ENCODE measurements at regions of chr16 and their contacts with region 1.

Region 1: DNA sequence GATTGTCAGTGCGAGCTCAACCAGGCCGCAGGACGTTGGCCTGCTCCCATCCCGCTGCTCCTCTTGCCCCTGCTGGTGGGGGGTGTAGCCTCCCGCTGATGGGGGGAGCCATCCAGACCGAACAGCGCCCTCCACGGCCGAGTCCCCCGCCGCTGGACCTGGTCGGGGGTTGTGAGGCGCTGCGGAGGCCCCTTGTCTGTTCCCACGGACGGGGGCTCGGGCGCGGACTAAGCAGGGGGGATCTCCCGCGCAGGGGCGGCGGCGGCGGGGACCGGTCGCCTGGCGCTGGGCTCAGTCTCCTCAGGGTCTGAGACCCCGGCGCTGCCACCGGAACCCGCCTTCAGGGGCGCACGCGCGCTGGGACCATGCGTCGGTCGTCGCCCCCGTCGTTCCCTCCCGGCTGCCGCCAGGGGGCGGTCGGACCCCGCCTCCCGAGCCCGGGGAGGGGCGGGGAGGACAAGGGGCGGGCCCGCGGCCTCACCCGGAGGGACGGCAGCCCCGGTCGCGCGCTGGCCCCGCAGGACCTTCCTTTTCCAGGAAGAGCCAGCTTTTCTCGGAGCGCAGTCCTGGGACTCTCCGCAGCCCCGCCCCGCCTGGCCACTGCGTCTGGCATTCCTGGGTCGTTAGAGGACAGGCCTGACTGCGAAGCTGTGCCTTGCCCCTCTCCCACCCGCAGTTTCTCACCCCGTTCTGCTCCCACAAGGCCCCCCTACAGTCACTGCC is 6.3 kb upstream of the IL32 start:
- DNase-seq: peak; percentile 81
- ATAC-seq: peak; percentile 99
- H3K4me3 ChIP-seq: peak overlapping the region; percentile 75
- H3K27ac ChIP-seq: peak overlapping the region; percentile 89
- H3K4me1 ChIP-seq: peaks cover 5% of the 10 kb centered on the region
- H3K27me3 ChIP-seq: no peaks in the 10 kb centered on the region; the same call in 1 of the 2 replicates
- CTCF ChIP-seq: peak; percentile 94
- POLR2A ChIP-seq: peak; percentile 39; the same call in 1 of the 2 replicates
- RAD21 ChIP-seq: peak; percentile 86

Region 2: DNA sequence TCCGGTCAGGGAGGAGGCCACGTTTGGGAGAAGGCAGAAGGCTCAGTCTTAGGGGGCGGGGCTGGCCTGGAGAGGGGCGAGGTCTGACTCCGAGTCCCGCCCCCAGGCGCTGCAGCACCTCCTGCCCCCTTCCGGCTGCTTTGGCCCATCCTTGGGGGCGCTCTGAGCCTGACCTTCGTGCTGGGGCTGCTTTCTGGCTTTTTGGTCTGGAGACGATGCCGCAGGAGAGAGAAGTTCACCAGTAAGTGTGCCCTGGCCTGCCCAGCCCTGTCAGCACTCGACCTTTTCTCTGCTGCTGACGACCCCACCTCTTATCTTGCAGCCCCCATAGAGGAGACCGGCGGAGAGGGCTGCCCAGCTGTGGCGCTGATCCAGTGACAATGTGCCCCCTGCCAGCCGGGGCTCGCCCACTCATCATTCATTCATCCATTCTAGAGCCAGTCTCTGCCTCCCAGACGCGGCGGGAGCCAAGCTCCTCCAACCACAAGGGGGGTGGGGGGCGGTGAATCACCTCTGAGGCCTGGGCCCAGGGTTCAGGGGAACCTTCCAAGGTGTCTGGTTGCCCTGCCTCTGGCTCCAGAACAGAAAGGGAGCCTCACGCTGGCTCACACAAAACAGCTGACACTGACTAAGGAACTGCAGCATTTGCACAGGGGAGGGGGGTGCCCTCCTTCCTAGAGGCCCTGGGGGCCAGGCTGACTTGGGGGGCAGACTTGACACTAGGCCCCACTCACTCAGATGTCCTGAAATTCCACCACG is 37.5 kb before region 1 on chr16:
- CTCF ChIA-PET with region 1: no interaction called
- POLR2A ChIA-PET with region 1: interaction called, 12 read pairs
- dilution Hi-C with region 1: no loop called
- in situ Hi-C with region 1: no loop called
- intact Hi-C with region 1: no loop called
- DNase-seq: peak; percentile 94
- ATAC-seq: peak; percentile 46
- H3K4me3 ChIP-seq: peak overlapping the region; percentile 77
- H3K27ac ChIP-seq: peak overlapping the region; percentile 97
- H3K4me1 ChIP-seq: peaks cover 11% of the 10 kb centered on the region
- H3K27me3 ChIP-seq: no peaks in the 10 kb centered on the region; the same call in 1 of the 2 replicates
- CTCF ChIP-seq: peak; percentile 38
- POLR2A ChIP-seq: peak; percentile 34; the same call in 1 of the 2 replicates
- RAD21 ChIP-seq: no peak

Region 3: GRCh38 chr16:3099732-3100499 is 40.8 kb after region 1 on chr16:
- CTCF ChIA-PET with region 1: interaction called, 3 read pairs
- POLR2A ChIA-PET with region 1: no interaction called
- dilution Hi-C with region 1: no loop called
- in situ Hi-C with region 1: loop called (anchors 5 kb)
- intact Hi-C with region 1: no loop called
- DNase-seq: peak; percentile 78
- ATAC-seq: peak; percentile 99
- H3K4me3 ChIP-seq: peak overlapping the region; percentile 31; the same call in 1 of the 2 replicates
- H3K27ac ChIP-seq: no peak overlapping the region
- H3K4me1 ChIP-seq: peaks cover 3% of the 10 kb centered on the region
- H3K27me3 ChIP-seq: peaks cover 27% of the 10 kb centered on the region
- CTCF ChIP-seq: no peak
- POLR2A ChIP-seq: no peak
- RAD21 ChIP-seq: no peak

Region 4: DNA sequence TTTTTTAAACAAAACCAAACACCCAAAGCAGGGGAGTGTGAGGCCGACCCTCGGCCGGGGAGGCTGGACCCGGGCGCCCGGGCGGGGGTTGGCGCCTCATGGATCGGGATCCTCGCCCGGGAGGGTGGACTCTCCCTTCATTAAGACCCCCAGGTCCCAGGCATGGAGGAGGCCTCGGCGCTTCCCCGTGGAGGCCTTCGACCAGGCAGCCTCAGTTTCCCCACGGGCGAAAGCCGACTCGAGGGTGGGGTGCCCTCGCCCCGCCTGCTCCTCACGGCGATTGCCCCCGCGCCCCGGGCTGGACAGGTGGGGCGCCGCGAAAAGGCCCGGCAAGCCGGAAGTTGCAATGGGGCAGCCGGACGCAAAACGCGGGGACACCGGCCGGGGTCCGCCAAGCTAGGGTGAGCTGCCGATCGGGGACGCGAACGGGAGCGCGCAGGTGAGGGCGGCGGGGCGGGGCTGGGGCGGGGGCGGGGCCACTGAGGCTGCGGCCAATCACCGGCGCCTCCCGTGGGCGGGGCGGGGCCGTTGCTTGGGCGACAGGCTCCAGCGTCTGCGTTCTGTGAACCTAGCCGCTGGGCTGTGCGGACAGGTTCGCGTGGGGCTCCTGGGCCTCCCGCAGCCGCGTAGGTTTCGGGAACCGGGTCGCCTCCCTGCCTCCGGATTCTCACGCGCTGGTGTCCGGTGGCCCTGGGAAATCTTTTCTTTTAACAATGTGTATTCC is 47.2 kb after region 1 on chr16:
- CTCF ChIA-PET with region 1: interaction called, 3 read pairs
- POLR2A ChIA-PET with region 1: no interaction called
- dilution Hi-C with region 1: no loop called
- in situ Hi-C with region 1: loop called (anchors 5 kb)
- intact Hi-C with region 1: loop called (anchors 2 kb)
- DNase-seq: peak; percentile 89
- ATAC-seq: peak; percentile 99
- H3K4me3 ChIP-seq: peak overlapping the region; percentile 87
- H3K27ac ChIP-seq: peak overlapping the region; percentile 78
- H3K4me1 ChIP-seq: no peaks in the 10 kb centered on the region
- H3K27me3 ChIP-seq: no peaks in the 10 kb centered on the region
- CTCF ChIP-seq: no peak
- POLR2A ChIP-seq: 0 out of 2 replicates have a peak, but pooled peaks have one; percentile 12
- RAD21 ChIP-seq: no peak

Region 5: DNA sequence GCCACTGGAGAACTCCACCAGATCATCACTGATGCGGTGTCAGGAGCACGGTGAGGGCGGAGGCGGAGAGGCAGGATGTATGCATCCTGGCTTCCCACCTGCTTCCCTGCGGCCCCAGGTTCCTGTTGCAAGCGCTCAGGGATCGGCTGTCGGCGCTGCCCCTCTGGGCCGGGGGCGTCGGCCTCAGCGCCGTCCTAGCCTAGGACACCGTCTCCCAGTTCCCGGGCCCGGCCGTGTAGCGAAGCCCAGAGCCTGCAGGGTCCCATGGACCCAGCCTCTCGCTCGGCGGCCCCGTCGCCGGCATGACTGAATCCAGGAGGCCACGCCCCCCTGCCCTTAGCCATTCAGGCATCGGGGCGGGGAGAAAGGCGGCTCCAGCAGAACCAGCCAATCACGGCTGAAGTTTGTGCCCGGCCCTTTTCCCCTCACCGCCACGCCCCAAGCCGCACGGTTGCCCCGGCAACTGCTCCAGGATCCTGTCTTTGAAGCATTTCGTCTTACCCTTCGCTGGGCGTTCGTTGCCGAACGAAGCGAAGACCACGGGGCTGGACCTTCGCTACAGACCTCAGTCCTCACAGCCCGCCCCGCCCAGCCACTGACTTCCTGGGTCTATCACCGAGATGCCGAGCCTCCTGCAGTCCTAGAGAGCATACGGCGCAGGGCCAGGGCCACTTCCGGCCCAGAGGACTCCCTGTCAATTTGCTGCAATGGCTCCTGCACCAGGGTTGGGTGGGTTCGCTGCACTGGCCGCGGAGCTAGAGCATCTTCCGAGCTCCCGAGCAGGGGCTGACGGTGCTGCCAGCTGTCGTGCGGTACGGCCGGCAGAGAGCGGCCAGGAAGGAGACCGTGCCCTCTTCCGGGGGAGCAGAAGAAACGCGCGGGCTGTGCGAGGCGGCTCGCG is 65.1 kb after region 1 on chr16:
- CTCF ChIA-PET with region 1: interaction called, 9 read pairs
- POLR2A ChIA-PET with region 1: no interaction called
- dilution Hi-C with region 1: no loop called
- in situ Hi-C with region 1: no loop called
- intact Hi-C with region 1: loop called (anchors 1 kb)
- DNase-seq: peak; percentile 87
- ATAC-seq: peak; percentile 97
- H3K4me3 ChIP-seq: peak overlapping the region; percentile 48
- H3K27ac ChIP-seq: peak overlapping the region; percentile 53
- H3K4me1 ChIP-seq: peaks cover 5% of the 10 kb centered on the region
- H3K27me3 ChIP-seq: no peaks in the 10 kb centered on the region
- CTCF ChIP-seq: peak; percentile 37
- POLR2A ChIP-seq: no peak
- RAD21 ChIP-seq: peak; percentile 38; the same call in 1 of the 2 replicates

Region 6: DNA sequence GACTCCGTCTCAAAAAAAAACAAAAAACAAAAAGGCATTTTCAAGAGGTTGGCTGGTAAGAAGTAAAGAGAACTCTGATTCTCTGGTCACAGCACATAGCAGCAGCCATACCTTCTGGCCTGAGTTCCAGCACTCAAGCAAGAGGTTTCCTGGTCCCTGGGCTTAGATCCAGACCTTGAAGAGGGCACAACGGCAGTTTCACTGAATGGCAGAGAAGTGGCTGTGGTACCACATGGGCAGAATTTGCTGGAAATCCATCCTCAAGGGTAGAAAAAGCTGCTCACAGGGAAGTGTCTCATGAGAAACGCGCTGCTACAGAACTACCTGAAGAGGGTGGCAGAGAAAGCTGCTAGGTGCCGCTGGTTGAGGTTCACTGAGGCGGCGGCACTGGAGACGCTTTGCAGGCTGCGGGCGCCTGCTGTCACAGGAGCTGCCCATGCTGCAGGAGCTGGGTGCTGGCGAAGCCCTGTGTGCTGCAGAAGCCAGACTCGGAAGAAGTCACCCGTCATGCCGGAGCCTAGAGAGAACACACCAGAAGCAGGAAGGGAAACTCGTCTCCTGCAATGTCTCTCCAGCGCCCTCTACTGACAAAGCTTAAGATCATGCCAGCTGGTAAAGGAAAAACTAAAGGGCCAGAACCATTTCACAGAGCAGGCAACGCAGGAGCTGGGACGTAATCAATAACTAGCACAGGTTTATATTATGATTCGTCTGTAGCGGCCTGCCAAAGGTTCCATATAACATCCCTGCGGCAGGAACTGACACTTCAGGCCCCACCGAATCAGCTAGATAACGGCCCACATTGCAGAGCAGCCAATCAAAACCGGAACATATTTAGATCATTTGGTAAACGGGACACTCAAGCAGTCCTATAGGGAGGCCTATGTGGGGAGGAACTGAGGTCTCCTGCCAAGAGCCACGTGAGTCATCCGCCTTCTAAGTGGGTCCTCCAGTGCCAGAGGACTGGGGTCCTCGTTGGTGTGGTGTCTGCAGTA is 70.3 kb after region 1 on chr16:
- CTCF ChIA-PET with region 1: interaction called, 9 read pairs
- POLR2A ChIA-PET with region 1: no interaction called
- dilution Hi-C with region 1: no loop called
- in situ Hi-C with region 1: no loop called
- intact Hi-C with region 1: loop called (anchors 1 kb)
- DNase-seq: peak; percentile 86
- ATAC-seq: peak; percentile 68
- H3K4me3 ChIP-seq: peak overlapping the region; percentile 2; the same call in 1 of the 2 replicates
- H3K27ac ChIP-seq: no peak overlapping the region
- H3K4me1 ChIP-seq: peaks cover 4% of the 10 kb centered on the region
- H3K27me3 ChIP-seq: no peaks in the 10 kb centered on the region
- CTCF ChIP-seq: peak; percentile 89
- POLR2A ChIP-seq: no peak
- RAD21 ChIP-seq: peak; percentile 78

Region 7: GRCh38 chr16:3166510-3166895 is 107.3 kb after region 1 on chr16:
- CTCF ChIA-PET with region 1: interaction called, 4 read pairs
- POLR2A ChIA-PET with region 1: no interaction called
- dilution Hi-C with region 1: no loop called
- in situ Hi-C with region 1: no loop called
- intact Hi-C with region 1: loop called (anchors 1 kb)
- DNase-seq: no peak
- ATAC-seq: no peak
- H3K4me3 ChIP-seq: no peak overlapping the region
- H3K27ac ChIP-seq: no peak overlapping the region
- H3K4me1 ChIP-seq: no peaks in the 10 kb centered on the region
- H3K27me3 ChIP-seq: peaks cover 26% of the 10 kb centered on the region
- CTCF ChIP-seq: no peak
- POLR2A ChIP-seq: no peak
- RAD21 ChIP-seq: no peak

Region 8: GRCh38 chr16:3346041-3346440 is 286.9 kb after region 1 on chr16:
- CTCF ChIA-PET with region 1: no interaction called
- POLR2A ChIA-PET with region 1: no interaction called
- dilution Hi-C with region 1: no loop called
- in situ Hi-C with region 1: no loop called
- intact Hi-C with region 1: no loop called
- DNase-seq: no peak
- ATAC-seq: no peak
- H3K4me3 ChIP-seq: no peak overlapping the region
- H3K27ac ChIP-seq: no peak overlapping the region
- H3K4me1 ChIP-seq: no peaks in the 10 kb centered on the region
- H3K27me3 ChIP-seq: no peaks in the 10 kb centered on the region; the same call in 1 of the 2 replicates
- CTCF ChIP-seq: no peak
- POLR2A ChIP-seq: no peak
- RAD21 ChIP-seq: no peak

Region 9: DNA sequence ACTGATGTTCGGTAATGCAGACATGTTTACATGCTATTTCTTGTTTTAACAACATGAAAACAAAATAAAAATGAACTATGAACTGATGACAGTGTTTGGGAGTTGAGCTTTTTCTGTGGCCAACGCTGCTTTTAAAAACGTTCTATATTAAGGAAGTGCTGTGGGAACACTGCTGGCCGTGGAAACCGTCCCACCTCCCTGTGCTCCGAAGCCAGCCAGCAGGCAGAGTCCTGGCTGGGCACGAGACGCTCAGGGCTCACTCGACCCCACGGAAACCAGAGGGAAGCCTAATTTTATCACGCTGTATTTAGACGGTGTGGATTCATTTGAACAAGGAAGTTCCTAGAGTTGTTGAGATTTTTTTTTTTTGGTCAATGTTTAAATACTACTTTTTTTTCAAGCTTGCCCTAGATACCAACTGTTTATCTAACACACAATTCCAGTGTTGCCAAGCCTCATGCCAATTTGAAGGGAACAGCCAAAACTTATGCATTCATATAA is 1031.2 kb after region 1 on chr16:
- CTCF ChIA-PET with region 1: no interaction called
- POLR2A ChIA-PET with region 1: no interaction called
- dilution Hi-C with region 1: no loop called
- in situ Hi-C with region 1: no loop called
- intact Hi-C with region 1: no loop called
- DNase-seq: no peak
- ATAC-seq: no peak
- H3K4me3 ChIP-seq: no peak overlapping the region
- H3K27ac ChIP-seq: no peak overlapping the region
- H3K4me1 ChIP-seq: peaks cover 19% of the 10 kb centered on the region
- H3K27me3 ChIP-seq: no peaks in the 10 kb centered on the region
- CTCF ChIP-seq: no peak
- POLR2A ChIP-seq: no peak
- RAD21 ChIP-seq: no peak